IMR-90 (cell line): ENCODE measurements at regions of chr17 and their contacts with region 1.

Region 1: DNA sequence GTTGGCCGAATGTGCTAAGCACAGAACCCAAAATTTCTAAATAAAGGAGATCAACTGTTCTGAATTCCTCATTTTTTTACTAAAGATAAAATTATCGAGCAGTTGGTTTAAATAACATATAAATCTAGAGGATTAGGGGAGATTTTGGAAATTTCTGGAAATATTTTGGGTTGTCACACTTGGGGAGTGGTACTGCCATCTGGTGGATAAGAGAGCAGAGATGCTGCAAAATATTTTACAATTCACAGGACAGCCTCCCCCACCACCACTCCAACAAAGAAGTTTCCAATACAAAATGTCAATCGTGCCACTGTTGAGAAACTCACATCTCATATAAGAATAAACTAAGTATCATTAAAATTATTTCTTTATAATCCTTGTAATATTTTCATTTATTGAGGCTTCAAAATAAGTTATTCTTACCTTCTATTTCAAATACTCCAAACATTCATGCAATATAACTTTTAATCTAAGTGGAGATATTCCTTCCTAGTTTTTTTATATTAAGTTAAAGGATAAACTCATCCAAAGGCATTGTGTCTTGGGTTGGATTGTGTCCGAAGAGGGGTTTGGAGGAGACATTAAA is 17.0 kb upstream of the ABCA8 start:
- DNase-seq: peak; percentile 36
- ATAC-seq: peak; percentile 71
- H3K4me3 ChIP-seq: no peak overlapping the region
- H3K27ac ChIP-seq: no peak overlapping the region
- H3K4me1 ChIP-seq: no peaks in the 10 kb centered on the region
- H3K27me3 ChIP-seq: no peaks in the 10 kb centered on the region
- CTCF ChIP-seq: peak; percentile 79
- POLR2A ChIP-seq: no peak
- RAD21 ChIP-seq: peak; percentile 76

Region 2: DNA sequence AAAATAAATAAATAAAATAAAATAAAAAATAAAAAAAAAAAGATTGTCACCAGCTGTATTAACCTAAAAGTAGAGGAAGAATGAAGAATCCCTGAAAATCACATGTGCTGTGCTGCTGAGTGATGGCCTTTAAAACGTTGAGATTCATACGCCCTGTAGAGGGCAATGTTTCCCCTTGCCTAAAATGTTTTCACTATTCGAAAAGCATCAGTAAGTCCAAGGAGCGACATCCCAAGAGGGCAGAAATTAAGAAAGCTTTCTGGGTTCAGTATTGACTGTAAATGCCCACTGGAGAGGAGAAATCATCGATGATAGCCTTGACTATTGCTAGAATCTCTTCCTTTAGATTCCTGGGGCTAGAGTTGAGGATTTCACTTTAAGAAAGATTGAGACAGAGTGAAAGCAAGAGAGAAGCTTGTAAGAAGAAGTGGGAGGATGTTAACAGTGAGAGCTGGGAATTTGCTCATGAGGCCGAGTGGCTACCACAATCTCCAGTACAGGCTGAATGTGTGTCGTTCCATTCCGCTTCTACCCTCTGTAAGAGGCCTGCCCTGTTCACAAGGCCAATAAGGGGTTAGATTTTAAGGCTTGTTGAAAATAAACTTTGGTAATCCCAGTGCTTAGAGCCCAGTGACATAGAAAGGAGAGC is 200.2 kb before region 1 on chr17:
- CTCF ChIA-PET with region 1: interaction called, 6 read pairs
- POLR2A ChIA-PET with region 1: no interaction called
- dilution Hi-C with region 1: no loop called
- in situ Hi-C with region 1: loop called (anchors 5 kb)
- intact Hi-C with region 1: loop called (anchors 1 kb)
- DNase-seq: peak; percentile 75
- ATAC-seq: peak; percentile 96
- H3K4me3 ChIP-seq: peak overlapping the region; percentile 26; the same call in 1 of the 2 replicates
- H3K27ac ChIP-seq: no peak overlapping the region
- H3K4me1 ChIP-seq: peaks cover 4% of the 10 kb centered on the region; the same call in 1 of the 2 replicates
- H3K27me3 ChIP-seq: no peaks in the 10 kb centered on the region
- CTCF ChIP-seq: peak; percentile 78
- POLR2A ChIP-seq: no peak
- RAD21 ChIP-seq: peak; percentile 81

Region 3: GRCh38 chr17:68794636-68795434 is 177.4 kb before region 1 on chr17:
- CTCF ChIA-PET with region 1: interaction called, 3 read pairs
- POLR2A ChIA-PET with region 1: no interaction called
- dilution Hi-C with region 1: no loop called
- in situ Hi-C with region 1: no loop called
- intact Hi-C with region 1: loop called (anchors 1 kb)
- DNase-seq: peak; percentile 60
- ATAC-seq: peak; percentile 68
- H3K4me3 ChIP-seq: no peak overlapping the region
- H3K27ac ChIP-seq: peak overlapping the region; percentile 85
- H3K4me1 ChIP-seq: peaks cover 13% of the 10 kb centered on the region
- H3K27me3 ChIP-seq: no peaks in the 10 kb centered on the region
- CTCF ChIP-seq: peak; percentile 52
- POLR2A ChIP-seq: no peak
- RAD21 ChIP-seq: peak; percentile 23; the same call in 1 of the 2 replicates

Region 4: DNA sequence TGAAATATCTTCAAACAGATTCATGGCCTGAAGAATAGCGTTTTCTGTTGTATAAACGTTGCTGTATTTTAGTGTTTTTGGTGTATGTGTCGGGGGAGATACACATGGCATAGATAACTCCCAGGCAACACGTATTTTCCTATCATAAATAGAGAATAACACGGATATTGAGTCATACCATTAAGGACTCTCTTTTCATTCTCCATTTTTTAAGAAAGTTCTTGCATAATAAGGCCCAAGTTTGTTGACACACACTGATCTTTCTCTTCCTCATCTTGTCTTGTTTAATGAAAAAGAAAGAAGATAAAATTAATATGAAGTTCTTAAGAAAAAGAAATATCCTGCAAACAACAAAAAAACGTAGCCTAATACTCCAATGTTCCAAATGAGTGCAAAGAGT is 30.5 kb before region 1 on chr17:
- CTCF ChIA-PET with region 1: no interaction called
- POLR2A ChIA-PET with region 1: no interaction called
- dilution Hi-C with region 1: no loop called
- in situ Hi-C with region 1: no loop called
- intact Hi-C with region 1: loop called (anchors 2 kb)
- DNase-seq: no peak
- ATAC-seq: no peak
- H3K4me3 ChIP-seq: no peak overlapping the region
- H3K27ac ChIP-seq: no peak overlapping the region
- H3K4me1 ChIP-seq: no peaks in the 10 kb centered on the region
- H3K27me3 ChIP-seq: no peaks in the 10 kb centered on the region
- CTCF ChIP-seq: no peak
- POLR2A ChIP-seq: no peak
- RAD21 ChIP-seq: no peak

Region 5: DNA sequence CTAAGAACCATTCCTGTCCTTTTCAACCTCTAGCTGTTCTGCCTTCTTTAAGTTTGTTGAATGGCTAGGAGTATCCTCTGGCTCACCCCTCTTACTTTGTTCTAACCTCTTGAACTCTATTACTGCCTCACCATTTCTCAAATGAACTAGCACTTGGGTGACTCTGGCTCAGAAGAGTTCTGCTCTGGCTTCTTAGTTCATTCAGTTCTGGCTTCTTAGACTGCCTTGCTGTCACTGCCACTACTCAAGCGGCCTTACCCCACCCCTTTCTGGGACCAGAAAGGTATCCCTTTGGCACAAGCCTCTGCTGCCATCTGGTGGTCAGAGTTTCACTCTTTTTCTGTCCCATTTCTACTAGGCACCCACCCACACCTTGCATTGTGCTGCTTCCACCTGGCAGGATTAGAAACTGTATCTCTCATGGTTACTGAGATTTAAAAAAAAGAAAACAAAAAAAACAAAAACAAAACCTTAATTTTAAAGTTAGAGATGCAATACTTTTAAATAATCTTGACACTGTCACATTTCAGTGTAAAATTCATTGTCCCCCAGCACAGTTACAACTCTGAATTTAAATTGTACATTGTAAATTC is 263.2 kb after region 1 on chr17:
- CTCF ChIA-PET with region 1: no interaction called
- POLR2A ChIA-PET with region 1: no interaction called
- dilution Hi-C with region 1: no loop called
- in situ Hi-C with region 1: no loop called
- intact Hi-C with region 1: loop called (anchors 1 kb)
- DNase-seq: peak; percentile 70
- ATAC-seq: peak; percentile 94
- H3K4me3 ChIP-seq: no peak overlapping the region
- H3K27ac ChIP-seq: no peak overlapping the region
- H3K4me1 ChIP-seq: no peaks in the 10 kb centered on the region
- H3K27me3 ChIP-seq: no peaks in the 10 kb centered on the region
- CTCF ChIP-seq: peak; percentile 81
- POLR2A ChIP-seq: no peak
- RAD21 ChIP-seq: peak; percentile 81